Natural killer cell (primary cell): ENCODE measurements at regions of chrX and their contacts with region 1.

Region 1: GRCh38 chrX:42943051-42943974 is 165.3 kb upstream of the PPP1R2C start:
- DNase-seq: peak in 1 of 2 donors; percentile 58
- ATAC-seq: peak; percentile 46 to 65 (median 46)
- H3K4me3 ChIP-seq: no peak overlapping the region
- H3K4me3 Mint-ChIP-seq: peak overlapping the region; percentile 76
- H3K27ac ChIP-seq: peak overlapping the region; percentile 84
- H3K27ac Mint-ChIP-seq: peak overlapping the region; percentile 89 to 90
- H3K4me1 ChIP-seq: peaks cover 55% of the 10 kb centered on the region
- H3K4me1 Mint-ChIP-seq: peaks cover 66 to 95% of the 10 kb centered on the region in 2 donors
- H3K27me3 ChIP-seq: no peaks in the 10 kb centered on the region
- H3K27me3 Mint-ChIP-seq: no peaks in the 10 kb centered on the region
- CTCF ChIP-seq: no peak

Region 2: GRCh38 chrX:41923257-41923969 is 1019.9 kb before region 1 on chrX and contains the start of gene CASK:
- intact Hi-C with region 1: loop called (anchors 10 kb)
- DNase-seq: peak; percentile 65 to 94
- ATAC-seq: peak; percentile 76 to 89 (median 80)
- H3K4me3 ChIP-seq: peak within 1 kb of the TSS; percentile 69
- H3K4me3 Mint-ChIP-seq: peak within 1 kb of the TSS; percentile 88
- H3K27ac ChIP-seq: peak within 1 kb of the TSS; percentile 49
- H3K27ac Mint-ChIP-seq: peak within 1 kb of the TSS; percentile 58 to 83
- H3K4me1 ChIP-seq: peaks cover 10% of the 10 kb centered on the region
- H3K4me1 Mint-ChIP-seq: peaks cover 15 to 21% of the 10 kb centered on the region in 2 donors
- H3K27me3 ChIP-seq: no peaks in the 10 kb centered on the region
- H3K27me3 Mint-ChIP-seq: peaks cover 0 to 9% of the 10 kb centered on the region in 2 donors
- CTCF ChIP-seq: no peak
- total RNA-seq, gene CASK: 23.5 to 27.9 (median 25.6) TPM

Region 3: DNA sequence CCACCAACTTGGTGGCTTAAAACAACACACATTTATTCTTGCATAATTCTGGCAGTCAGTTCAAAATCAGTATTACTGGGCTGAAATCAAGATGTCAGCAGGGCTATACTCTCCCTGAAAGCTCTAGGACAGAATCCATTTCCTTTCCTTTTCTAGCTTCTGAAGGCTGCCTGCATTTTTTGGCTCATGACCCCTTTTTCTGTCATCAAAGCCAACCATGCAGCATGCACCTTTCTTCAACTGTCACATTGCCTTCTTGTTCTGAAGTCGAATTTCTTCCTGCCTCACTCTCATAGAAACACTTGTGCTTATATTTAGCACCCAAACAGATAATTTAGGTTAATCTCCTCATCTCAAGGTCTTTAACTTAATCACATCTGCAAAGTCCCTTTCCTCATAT is 85.5 kb before region 1 on chrX:
- intact Hi-C with region 1: no loop called
- DNase-seq: no peak
- ATAC-seq: no peak
- H3K4me3 ChIP-seq: no peak overlapping the region
- H3K4me3 Mint-ChIP-seq: no peak overlapping the region
- H3K27ac ChIP-seq: no peak overlapping the region
- H3K27ac Mint-ChIP-seq: no peak overlapping the region
- H3K4me1 ChIP-seq: no peaks in the 10 kb centered on the region
- H3K4me1 Mint-ChIP-seq: peaks cover 0 to 1% of the 10 kb centered on the region in 2 donors
- H3K27me3 ChIP-seq: no peaks in the 10 kb centered on the region
- H3K27me3 Mint-ChIP-seq: peaks cover 0 to 24% of the 10 kb centered on the region in 2 donors
- CTCF ChIP-seq: no peak

Region 4: GRCh38 chrX:43065978-43066377 is 122.7 kb after region 1 on chrX:
- intact Hi-C with region 1: no loop called
- DNase-seq: no peak
- ATAC-seq: no peak
- H3K4me3 ChIP-seq: no peak overlapping the region
- H3K4me3 Mint-ChIP-seq: no peak overlapping the region
- H3K27ac ChIP-seq: no peak overlapping the region
- H3K27ac Mint-ChIP-seq: no peak overlapping the region
- H3K4me1 ChIP-seq: no peaks in the 10 kb centered on the region
- H3K4me1 Mint-ChIP-seq: no peaks in the 10 kb centered on the region
- H3K27me3 ChIP-seq: no peaks in the 10 kb centered on the region
- H3K27me3 Mint-ChIP-seq: peaks cover 0 to 13% of the 10 kb centered on the region in 2 donors
- CTCF ChIP-seq: no peak